ENCODE measurements at regions of chr2 and their contacts with region 1.

Region 1: GRCh38 chr2:207676827-207677354 is 34.5 kb upstream of the CCNYL1 start:
- DNase-seq: no peak

Region 2: DNA sequence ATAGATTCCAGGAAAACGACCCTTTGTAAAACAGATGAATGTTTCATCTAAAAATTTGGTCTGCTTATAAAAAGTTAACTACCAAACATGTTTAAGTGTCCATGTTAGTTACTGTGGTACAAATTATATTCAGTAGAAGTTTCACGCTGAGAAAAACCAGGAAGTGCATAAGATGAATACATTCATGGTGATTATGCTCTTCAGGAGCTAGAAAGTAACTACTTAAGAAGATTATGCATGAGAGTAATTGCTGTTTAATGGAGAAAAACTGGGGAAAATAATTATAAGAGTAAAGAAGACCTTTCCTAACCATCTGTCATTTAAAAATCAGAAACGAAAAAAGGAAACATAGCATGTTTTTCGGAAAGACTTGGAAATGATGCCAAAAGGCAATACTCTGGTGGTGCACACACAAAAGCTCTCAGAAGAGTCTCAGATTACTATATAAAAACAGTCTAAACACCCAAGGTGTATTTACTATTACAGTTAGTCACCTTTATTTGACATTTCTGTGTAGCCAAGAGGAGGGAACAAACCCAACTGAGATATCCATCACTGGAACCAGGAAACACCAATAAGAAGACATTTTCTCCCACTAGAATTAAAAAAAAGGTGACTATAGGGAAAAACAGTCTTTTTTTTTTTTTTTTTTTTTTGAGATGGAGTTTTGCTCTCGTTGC is 12.9 kb before region 1 on chr2:
- CTCF ChIA-PET with region 1: interaction called, 10 read pairs
- POLR2A ChIA-PET with region 1: no interaction called
- DNase-seq: no peak

Region 3: GRCh38 chr2:207694811-207695281 is 18.0 kb after region 1 on chr2:
- CTCF ChIA-PET with region 1: no interaction called
- POLR2A ChIA-PET with region 1: no interaction called
- DNase-seq: no peak

Region 4: GRCh38 chr2:207734264-207734635 is 57.4 kb after region 1 on chr2:
- CTCF ChIA-PET with region 1: no interaction called
- POLR2A ChIA-PET with region 1: no interaction called
- DNase-seq: peak; percentile 25

Measured in HEK293T (cell line).